ENCODE measurements at regions of chr12 and their contacts with region 1.

Region 1: GRCh38 chr12:49110464-49111155 is at the start of gene LMBR1L:
- DNase-seq: peak; percentile 99
- H3K4me3 ChIP-seq: peak within 1 kb of the TSS; percentile 81
- H3K27ac ChIP-seq: peak within 1 kb of the TSS; percentile 51
- H3K4me1 ChIP-seq: peaks cover 28% of the 10 kb centered on the region
- CTCF ChIP-seq: peak; percentile 65
- total RNA-seq, gene LMBR1L: 26.8 and 37.2 TPM in 2 replicates

Region 2: GRCh38 chr12:48527891-48528675 is 582.5 kb before region 1 on chr12:
- CTCF ChIA-PET with region 1: no interaction called
- POLR2A ChIA-PET with region 1: no interaction called
- intact Hi-C with region 1: no loop called
- DNase-seq: no peak
- H3K4me3 ChIP-seq: no peak overlapping the region
- H3K27ac ChIP-seq: no peak overlapping the region
- H3K4me1 ChIP-seq: no peaks in the 10 kb centered on the region
- CTCF ChIP-seq: no peak

Region 3: GRCh38 chr12:48890657-48891418 is 219.8 kb before region 1 on chr12:
- CTCF ChIA-PET with region 1: interaction called, 10 read pairs
- POLR2A ChIA-PET with region 1: no interaction called
- intact Hi-C with region 1: no loop called
- DNase-seq: peak; percentile 77
- H3K4me3 ChIP-seq: peak overlapping the region; percentile 30
- H3K27ac ChIP-seq: no peak overlapping the region
- H3K4me1 ChIP-seq: peaks cover 6% of the 10 kb centered on the region
- CTCF ChIP-seq: peak; percentile 95

Measured in OCI-LY7 (cell line).